ENCODE measurements at regions of chr3 and their contacts with region 1.

Region 1: GRCh38 chr3:156509189-156510174 is 45.4 kb downstream of the SSR3 start:
- DNase-seq: peak; percentile 34
- H3K4me3 ChIP-seq: no peak overlapping the region
- H3K27ac ChIP-seq: no peak overlapping the region
- H3K27me3 ChIP-seq: no peaks in the 10 kb centered on the region
- CTCF ChIP-seq: peak; percentile 60

Region 2: GRCh38 chr3:155995525-155996351 is 513.7 kb before region 1 on chr3:
- CTCF ChIA-PET with region 1: interaction called, 13 read pairs
- POLR2A ChIA-PET with region 1: no interaction called
- DNase-seq: peak; percentile 32
- H3K4me3 ChIP-seq: no peak overlapping the region
- H3K27ac ChIP-seq: no peak overlapping the region
- H3K27me3 ChIP-seq: no peaks in the 10 kb centered on the region
- CTCF ChIP-seq: peak; percentile 61

Region 3: DNA sequence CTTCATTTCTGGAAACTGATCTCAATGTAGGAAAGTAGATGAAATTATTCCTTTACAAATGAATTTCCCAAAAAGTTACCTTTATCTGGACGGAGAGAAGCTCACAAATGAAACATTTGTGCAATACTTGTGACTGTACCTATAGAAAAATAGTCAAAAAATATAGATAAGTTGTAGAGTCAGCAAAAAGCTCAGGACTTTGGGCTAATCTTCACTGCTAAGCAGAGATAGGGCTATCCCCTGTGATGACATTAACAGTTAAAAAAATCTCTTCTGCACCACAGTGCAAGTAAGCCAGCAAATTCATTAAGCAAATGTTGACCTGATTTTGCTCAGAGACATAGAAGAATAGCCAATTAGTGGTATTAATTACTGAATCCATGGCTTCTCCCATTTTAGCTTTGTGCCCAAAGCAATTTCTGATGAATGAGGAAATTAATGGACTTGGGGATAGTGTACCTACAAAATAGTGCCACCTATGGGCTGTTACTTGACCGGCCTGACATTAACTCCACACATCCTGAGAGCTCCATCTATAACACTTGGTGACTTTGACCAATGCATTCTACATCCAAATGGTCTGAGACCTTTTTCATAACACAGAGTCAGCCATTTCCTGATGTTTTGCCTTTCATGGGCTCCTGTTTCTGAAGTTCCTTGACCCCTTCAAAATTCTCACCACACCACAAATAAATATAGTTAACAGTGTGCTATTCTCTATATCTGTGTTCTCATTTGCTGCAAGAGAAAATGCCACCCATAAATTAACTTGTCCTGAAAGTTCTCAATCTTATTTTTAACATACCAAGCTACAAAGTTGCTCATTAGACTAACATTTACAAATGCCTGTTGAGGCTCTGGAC is 59.5 kb before region 1 on chr3:
- CTCF ChIA-PET with region 1: interaction called, 20 read pairs
- POLR2A ChIA-PET with region 1: no interaction called
- DNase-seq: no peak
- H3K4me3 ChIP-seq: no peak overlapping the region
- H3K27ac ChIP-seq: no peak overlapping the region
- H3K27me3 ChIP-seq: peaks cover 6% of the 10 kb centered on the region
- CTCF ChIP-seq: peak; percentile 62

Region 4: DNA sequence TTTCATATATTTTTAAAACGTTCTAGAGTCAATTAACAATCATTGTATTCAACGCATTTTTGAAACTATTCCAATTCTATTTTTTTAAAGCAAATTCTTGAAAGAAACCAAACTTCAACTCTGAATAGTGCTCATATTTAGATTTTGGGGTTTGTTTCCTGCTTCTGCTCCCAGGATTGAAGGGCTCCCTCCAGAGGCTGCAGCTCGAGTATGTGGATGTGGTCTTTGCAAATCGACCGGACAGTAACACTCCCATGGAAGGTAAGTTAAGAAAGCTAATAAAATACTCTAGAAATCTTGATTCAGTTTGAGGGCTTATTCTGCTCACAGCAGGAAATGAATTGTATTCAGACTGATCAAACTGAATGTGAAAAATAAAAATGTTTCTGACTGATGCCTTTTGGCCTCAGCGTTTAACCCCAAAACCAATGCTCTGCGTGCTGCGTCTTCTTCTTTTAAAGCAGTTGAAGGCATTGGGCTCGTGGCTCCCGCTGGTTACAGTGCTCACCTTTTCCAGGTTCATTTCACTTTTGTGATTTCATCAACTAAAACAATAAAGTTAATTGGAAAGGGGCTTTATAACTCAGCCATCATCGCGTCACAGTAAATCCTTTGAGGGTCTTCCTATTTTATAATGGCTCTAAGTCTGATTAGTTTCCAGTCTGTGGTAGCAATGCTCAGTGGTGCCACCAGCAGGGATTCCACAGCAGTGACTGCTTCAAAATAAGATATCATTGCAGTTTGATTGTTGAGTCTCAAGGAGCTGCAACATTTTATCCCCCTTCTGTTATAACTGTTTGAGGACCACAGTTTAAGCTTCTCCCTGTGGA is 34.7 kb before region 1 on chr3:
- CTCF ChIA-PET with region 1: interaction called, 14 read pairs
- POLR2A ChIA-PET with region 1: no interaction called
- DNase-seq: no peak
- H3K4me3 ChIP-seq: no peak overlapping the region
- H3K27ac ChIP-seq: no peak overlapping the region
- H3K27me3 ChIP-seq: peaks cover 2% of the 10 kb centered on the region
- CTCF ChIP-seq: peak; percentile 44

Region 5: GRCh38 chr3:156527060-156527459 is 17.6 kb after region 1 on chr3:
- CTCF ChIA-PET with region 1: interaction called, 30 read pairs
- POLR2A ChIA-PET with region 1: no interaction called
- DNase-seq: no peak
- H3K4me3 ChIP-seq: no peak overlapping the region
- H3K27ac ChIP-seq: no peak overlapping the region
- H3K27me3 ChIP-seq: no peaks in the 10 kb centered on the region
- CTCF ChIP-seq: no peak

Region 6: DNA sequence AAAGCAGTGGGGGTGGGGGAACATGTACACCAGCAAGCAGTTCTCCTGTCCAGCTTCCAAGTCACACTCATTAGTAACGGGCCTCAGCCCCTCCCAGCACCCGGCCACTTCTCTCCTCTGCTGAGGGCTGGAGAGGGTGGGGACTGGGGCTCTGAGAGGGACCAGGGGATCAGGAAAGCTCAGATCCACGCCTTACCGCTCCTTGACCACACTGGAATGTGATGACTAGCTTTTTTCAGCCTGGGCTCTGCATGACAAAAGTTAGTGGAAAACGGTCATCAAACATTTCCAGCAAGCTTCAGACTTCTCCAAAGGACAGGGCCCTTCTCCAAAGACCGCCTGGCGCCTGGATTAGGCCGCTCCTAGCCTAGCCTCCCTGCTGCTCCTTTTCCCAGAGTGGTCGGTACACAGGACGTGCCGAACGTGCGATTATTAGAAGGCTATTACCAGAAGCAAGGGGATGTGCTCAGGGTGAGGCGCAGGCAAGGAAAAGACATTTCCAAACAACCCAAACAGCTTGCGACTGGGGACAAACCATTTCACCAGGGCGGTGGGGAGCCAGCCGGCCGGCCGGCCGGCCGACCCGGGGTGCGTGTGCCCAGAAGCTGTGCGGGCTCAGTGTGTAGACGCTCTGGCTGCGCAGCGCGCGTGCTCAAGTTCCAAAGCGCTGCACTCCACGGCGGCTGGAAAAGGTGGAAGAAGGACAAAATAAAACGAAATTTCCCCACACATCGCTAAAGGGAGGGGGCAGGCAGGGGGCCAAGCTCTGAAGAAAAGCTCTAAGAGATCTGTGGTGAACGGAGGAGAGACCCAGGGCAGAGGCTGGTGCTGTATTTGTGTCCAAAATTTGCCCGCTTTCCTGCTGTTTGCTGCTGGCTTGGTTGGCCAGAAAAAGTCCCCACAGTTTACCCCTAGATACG is 96.5 kb after region 1 on chr3:
- CTCF ChIA-PET with region 1: no interaction called
- POLR2A ChIA-PET with region 1: no interaction called
- DNase-seq: no peak
- H3K4me3 ChIP-seq: peak overlapping the region; percentile 52
- H3K27ac ChIP-seq: peak overlapping the region; percentile 75
- H3K27me3 ChIP-seq: no peaks in the 10 kb centered on the region
- CTCF ChIP-seq: no peak